GM12878 (cell line): ENCODE measurements at regions of chr18 and their contacts with region 1.

Region 1: GRCh38 chr18:45850021-45850420 is 24.5 kb downstream of the SIGLEC15 start:
- DNase-seq: peak; percentile 40
- ATAC-seq: peak; percentile 91
- H3K4me3 ChIP-seq: no peak overlapping the region
- H3K27ac ChIP-seq: peak overlapping the region; percentile 31; the same call in 1 of the 2 replicates
- H3K4me1 ChIP-seq: peaks cover 9% of the 10 kb centered on the region; the same call in 1 of the 2 replicates
- H3K27me3 ChIP-seq: no peaks in the 10 kb centered on the region
- CTCF ChIP-seq: peak; percentile 17 to 55 (median 30); a peak in 3 of 6 replicates
- EP300 ChIP-seq: no peak
- POLR2A ChIP-seq: no peak
- RAD21 ChIP-seq: no peak

Region 2: GRCh38 chr18:45677276-45677807 is 172.7 kb before region 1 on chr18:
- CTCF ChIA-PET with region 1: no interaction called
- POLR2A ChIA-PET with region 1: no interaction called
- RAD21 ChIA-PET with region 1: no interaction called
- SMC1A ChIA-PET with region 1: no interaction called
- in situ Hi-C with region 1: no loop called
- intact Hi-C with region 1: no loop called
- DNase-seq: no peak
- ATAC-seq: no peak
- H3K4me3 ChIP-seq: no peak overlapping the region
- H3K27ac ChIP-seq: no peak overlapping the region
- H3K4me1 ChIP-seq: no peaks in the 10 kb centered on the region
- H3K27me3 ChIP-seq: no peaks in the 10 kb centered on the region
- CTCF ChIP-seq: no peak
- EP300 ChIP-seq: no peak
- POLR2A ChIP-seq: no peak
- RAD21 ChIP-seq: no peak

Region 3: GRCh38 chr18:45874491-45875184 is 24.6 kb after region 1 on chr18:
- CTCF ChIA-PET with region 1: interaction called, 15 read pairs
- POLR2A ChIA-PET with region 1: no interaction called
- RAD21 ChIA-PET with region 1: interaction called, 3 read pairs
- SMC1A ChIA-PET with region 1: interaction called, 8 read pairs
- in situ Hi-C with region 1: no loop called
- intact Hi-C with region 1: no loop called
- DNase-seq: peak; percentile 92
- ATAC-seq: peak; percentile 94
- H3K4me3 ChIP-seq: no peak overlapping the region
- H3K27ac ChIP-seq: peak overlapping the region; percentile 86
- H3K4me1 ChIP-seq: peaks cover 20% of the 10 kb centered on the region
- H3K27me3 ChIP-seq: no peaks in the 10 kb centered on the region
- CTCF ChIP-seq: no peak
- EP300 ChIP-seq: no peak; a peak in 1 of 4 replicates
- POLR2A ChIP-seq: no peak
- RAD21 ChIP-seq: no peak